ENCODE measurements at regions of chr9 and their contacts with region 1.

Region 1: GRCh38 chr9:70602321-70603019 is 188.0 kb upstream of the KLF9 start:
- DNase-seq: peak; percentile 87
- H3K4me3 ChIP-seq: no peak overlapping the region
- H3K27ac ChIP-seq: peak overlapping the region; percentile 73
- H3K4me1 ChIP-seq: peaks cover 17% of the 10 kb centered on the region
- H3K27me3 ChIP-seq: no peaks in the 10 kb centered on the region
- CTCF ChIP-seq: peak; percentile 66 to 77
- POLR2A ChIP-seq: no peak

Region 2: DNA sequence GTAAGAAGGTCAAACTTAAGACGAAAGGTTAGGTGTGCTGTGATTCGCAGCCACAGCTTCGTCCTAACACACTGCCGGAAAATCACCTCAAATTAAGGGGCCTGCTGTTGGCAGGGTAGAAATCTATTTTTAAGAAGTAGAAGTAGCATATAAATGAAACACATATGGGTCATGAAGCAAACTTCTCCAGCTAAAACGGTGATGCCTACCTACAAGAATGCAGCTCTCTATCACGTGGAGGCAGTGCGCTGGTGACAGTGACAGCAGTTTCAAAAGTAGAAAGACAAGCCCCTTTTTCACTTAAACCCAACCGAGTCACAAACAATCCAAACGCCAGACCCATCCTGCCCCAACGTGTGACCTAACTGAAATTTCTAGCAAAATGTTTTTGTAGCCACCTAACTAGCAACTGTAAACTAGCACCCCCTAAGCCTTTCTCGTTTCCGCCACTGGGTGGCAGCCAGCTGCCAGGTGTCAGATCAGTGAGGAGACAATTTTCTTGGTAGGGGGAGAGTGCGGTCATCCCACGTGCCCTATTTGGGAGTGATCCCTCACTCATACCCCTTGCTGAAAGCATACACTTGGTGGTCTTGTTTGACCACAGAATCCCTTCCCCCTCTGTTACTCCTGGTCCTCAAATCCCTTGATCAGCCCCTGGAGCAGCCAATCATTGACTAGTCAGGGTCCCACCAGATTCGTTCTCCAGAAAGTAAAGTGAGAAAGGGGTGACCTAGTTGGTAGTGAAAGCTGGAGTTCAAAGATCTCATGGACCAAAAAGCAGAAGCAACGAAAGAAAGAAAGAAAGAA is 630.6 kb before region 1 on chr9:
- CTCF ChIA-PET with region 1: interaction called, 18 read pairs
- POLR2A ChIA-PET with region 1: no interaction called
- dilution Hi-C with region 1: no loop called
- intact Hi-C with region 1: loop called (anchors 1 kb)
- DNase-seq: peak; percentile 66
- H3K4me3 ChIP-seq: no peak overlapping the region
- H3K27ac ChIP-seq: no peak overlapping the region
- H3K4me1 ChIP-seq: peaks cover 19% of the 10 kb centered on the region
- H3K27me3 ChIP-seq: no peaks in the 10 kb centered on the region
- CTCF ChIP-seq: peak; percentile 86 to 87
- POLR2A ChIP-seq: no peak

Region 3: GRCh38 chr9:70340572-70340971 is 261.9 kb before region 1 on chr9:
- CTCF ChIA-PET with region 1: interaction called, 255 read pairs
- POLR2A ChIA-PET with region 1: interaction called, 8 read pairs
- dilution Hi-C with region 1: no loop called
- intact Hi-C with region 1: loop called (anchors 1 kb)
- DNase-seq: peak; percentile 40
- H3K4me3 ChIP-seq: no peak overlapping the region
- H3K27ac ChIP-seq: no peak overlapping the region
- H3K4me1 ChIP-seq: no peaks in the 10 kb centered on the region
- H3K27me3 ChIP-seq: no peaks in the 10 kb centered on the region
- CTCF ChIP-seq: peak in 1 of 2 donors; percentile 4
- POLR2A ChIP-seq: no peak

Region 4: DNA sequence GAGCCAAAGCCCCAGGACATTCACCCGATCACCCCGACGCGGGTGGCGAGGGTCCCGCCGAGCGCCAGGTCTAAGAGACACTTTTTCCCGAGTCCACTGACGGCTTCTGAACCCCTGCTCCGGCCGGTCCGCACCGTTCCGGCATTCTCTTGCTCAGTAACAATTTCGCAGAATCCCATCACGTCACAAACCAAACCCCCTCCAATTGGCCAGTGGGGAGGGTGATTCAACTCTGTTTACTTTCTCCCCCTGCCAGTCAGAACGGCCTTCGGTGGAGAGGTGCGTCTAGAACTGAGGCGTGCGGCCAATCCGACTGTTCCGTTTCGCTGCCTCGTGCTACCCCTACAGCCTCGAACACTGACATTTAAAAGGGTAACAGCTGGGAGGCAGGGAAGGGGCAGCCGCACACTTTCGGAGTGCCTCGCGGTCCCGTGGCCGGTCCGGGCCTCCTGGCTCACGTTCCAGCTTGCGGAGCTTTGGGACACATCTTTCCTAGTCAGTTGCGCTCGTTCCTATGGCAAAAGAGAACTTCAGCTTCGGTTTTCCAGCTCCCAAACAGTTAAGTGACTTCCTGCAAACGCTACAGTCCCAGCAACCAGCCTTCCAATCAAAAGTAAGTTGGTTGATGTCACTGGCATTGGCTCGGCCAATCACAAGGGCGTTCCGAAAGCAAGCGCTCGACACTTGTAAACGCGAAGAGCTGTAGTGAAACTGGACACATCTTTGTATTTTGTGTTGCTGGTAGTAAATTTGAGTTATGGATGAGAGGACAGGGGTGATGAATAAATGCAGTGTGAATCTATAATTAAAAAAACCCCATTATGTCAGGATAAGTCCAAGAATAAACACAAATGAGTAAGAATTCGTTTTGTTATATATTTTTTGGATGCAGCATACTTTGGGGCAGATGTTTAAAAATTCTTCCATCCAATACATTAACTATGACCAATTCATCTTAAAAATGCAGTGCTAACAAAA is 188.4 kb before region 1 on chr9 and contains the start of gene KLF9:
- CTCF ChIA-PET with region 1: interaction called, 46 read pairs
- POLR2A ChIA-PET with region 1: interaction called, 11 read pairs
- dilution Hi-C with region 1: no loop called
- intact Hi-C with region 1: loop called (anchors 1 kb)
- DNase-seq: peak; percentile 99
- H3K4me3 ChIP-seq: peak within 1 kb of the TSS; percentile 73 to 94 (median 91)
- H3K27ac ChIP-seq: peak within 1 kb of the TSS; percentile 84
- H3K4me1 ChIP-seq: peaks cover 33% of the 10 kb centered on the region
- H3K27me3 ChIP-seq: no peaks in the 10 kb centered on the region
- CTCF ChIP-seq: no peak
- POLR2A ChIP-seq: no peak
- total RNA-seq, gene KLF9: 17.2 and 23.1 TPM in 2 replicates

Region 5: GRCh38 chr9:70490478-70490877 is 112.0 kb before region 1 on chr9:
- CTCF ChIA-PET with region 1: interaction called, 54 read pairs
- POLR2A ChIA-PET with region 1: no interaction called
- dilution Hi-C with region 1: no loop called
- intact Hi-C with region 1: no loop called
- DNase-seq: no peak
- H3K4me3 ChIP-seq: no peak overlapping the region
- H3K27ac ChIP-seq: no peak overlapping the region
- H3K4me1 ChIP-seq: peaks cover 8% of the 10 kb centered on the region
- H3K27me3 ChIP-seq: no peaks in the 10 kb centered on the region
- CTCF ChIP-seq: no peak
- POLR2A ChIP-seq: no peak

Region 6: DNA sequence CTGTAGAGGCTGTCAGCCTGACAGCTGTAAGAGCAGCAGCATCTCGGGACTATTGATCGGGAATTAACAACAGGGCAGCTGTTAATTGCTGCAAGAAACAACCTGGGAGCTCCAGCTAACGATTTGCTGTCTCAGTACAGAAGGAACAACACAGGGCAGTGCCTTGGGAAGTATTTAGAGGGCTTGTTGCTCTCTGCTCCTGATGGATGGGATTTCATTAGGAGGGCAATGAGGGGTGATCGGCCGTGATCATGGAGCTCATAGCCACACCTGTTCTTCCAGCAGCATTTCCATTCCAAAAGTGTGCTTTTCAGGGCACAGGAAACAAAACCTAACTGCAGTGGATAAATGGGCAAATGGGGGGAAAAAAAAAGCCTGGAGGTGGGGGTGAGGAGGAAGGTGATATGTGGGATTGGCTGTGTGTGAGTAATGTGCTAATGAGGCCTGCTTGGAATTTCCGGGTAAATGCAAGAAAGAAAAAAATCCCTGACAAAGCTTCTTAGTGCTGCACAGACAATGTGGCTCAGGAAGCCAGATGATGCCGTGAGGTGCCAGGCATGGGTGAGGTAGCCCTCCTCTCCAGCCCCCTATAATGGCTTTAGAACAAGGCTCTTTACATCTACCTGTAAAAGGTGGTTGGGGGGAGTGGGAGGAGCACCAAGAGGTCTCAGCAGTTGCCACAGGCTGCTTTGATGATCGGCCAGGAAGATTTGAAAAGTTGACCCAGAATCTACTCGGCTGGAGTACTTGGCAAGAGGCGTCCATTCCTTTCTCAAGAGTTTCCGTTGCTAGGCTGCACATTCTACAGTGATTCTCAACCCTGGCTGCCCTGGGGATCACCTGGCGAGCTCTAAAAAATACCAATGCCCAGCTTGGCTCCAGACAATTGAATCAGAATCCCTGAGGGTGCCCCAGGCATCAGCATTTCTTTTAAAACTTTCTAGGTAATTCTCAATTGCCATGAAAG is 48.5 kb before region 1 on chr9:
- CTCF ChIA-PET with region 1: interaction called, 8 read pairs
- POLR2A ChIA-PET with region 1: no interaction called
- dilution Hi-C with region 1: no loop called
- intact Hi-C with region 1: loop called (anchors 1 kb)
- DNase-seq: peak; percentile 69
- H3K4me3 ChIP-seq: peak overlapping the region in 1 of 3 experiments; percentile 16
- H3K27ac ChIP-seq: peak overlapping the region; percentile 89
- H3K4me1 ChIP-seq: peaks cover 24% of the 10 kb centered on the region
- H3K27me3 ChIP-seq: no peaks in the 10 kb centered on the region
- CTCF ChIP-seq: no peak
- POLR2A ChIP-seq: peak; percentile 45

Region 7: DNA sequence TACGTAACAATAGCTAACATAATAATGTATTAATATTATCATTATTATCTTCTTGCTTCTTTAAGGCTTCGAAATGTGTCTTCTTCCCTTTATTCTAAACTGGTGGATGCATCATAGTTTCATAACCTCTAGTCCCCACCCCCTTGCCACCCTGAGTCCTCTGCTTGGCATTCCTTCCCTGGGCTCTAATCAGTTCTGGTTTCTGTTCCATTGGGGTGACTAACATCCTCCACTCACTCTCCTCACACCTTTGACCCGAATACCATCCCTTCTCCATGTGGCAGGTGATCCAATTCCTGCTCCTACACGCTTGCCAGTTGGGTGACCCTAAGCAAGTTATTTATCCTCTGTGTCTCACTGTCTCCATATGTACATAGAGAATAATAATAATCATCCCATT is 232.9 kb after region 1 on chr9:
- CTCF ChIA-PET with region 1: no interaction called
- POLR2A ChIA-PET with region 1: no interaction called
- dilution Hi-C with region 1: no loop called
- intact Hi-C with region 1: no loop called
- DNase-seq: no peak
- H3K4me3 ChIP-seq: no peak overlapping the region
- H3K27ac ChIP-seq: no peak overlapping the region
- H3K4me1 ChIP-seq: peaks cover 4% of the 10 kb centered on the region
- H3K27me3 ChIP-seq: no peaks in the 10 kb centered on the region
- CTCF ChIP-seq: no peak
- POLR2A ChIP-seq: no peak